A549 (cell line): ENCODE measurements at regions of chr21 and their contacts with region 1.

Region 1: DNA sequence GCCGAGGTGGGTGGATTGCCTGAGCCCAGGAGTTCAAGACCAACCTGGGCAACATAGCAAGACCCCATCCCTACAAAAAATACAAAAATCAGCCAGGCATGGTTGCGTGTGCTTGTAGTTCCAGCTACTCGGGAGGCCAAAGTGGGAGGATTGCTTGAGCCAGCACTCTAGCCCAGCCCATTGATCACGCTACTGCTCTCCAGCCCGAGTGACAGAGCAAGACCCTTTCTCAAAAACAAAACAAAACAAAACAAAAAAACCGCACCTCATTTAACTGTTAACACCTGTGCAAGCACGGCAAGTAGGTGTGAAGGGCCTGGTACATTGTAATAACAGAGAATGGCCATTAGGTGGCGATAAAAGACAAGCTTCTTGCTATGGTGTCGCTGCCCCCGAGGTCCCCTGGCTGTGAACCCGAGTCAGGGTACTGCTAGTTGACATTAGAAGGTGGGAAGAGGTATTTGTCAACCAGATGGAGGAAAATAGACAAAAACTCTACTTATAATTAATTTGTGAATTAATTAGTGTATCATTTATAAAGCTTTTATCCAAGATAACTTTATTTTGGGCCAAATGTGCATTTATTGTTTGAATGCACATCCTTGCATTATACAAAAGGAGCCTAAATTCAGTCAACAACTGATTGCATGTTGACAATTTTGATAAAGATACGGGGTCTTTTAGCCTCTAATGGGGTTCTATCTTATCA is 66.5 kb downstream of the SH3BGR start:
- DNase-seq: peak; percentile 65 to 69
- ATAC-seq: peak; percentile 77 to 92
- H3K4me3 ChIP-seq: no peak overlapping the region
- H3K27ac ChIP-seq: 0 out of 6 replicates have a peak overlapping the region, but pooled peaks of 1 of the 2 experiments have one; percentile 31
- H3K4me1 ChIP-seq: peaks cover 4% of the 10 kb centered on the region; the same call in 2 of the 3 replicates
- CTCF ChIP-seq: peak; percentile 76
- EP300 ChIP-seq: no peak
- POLR2A ChIP-seq: no peak
- RAD21 ChIP-seq: peak; percentile 89 to 92

Region 2: DNA sequence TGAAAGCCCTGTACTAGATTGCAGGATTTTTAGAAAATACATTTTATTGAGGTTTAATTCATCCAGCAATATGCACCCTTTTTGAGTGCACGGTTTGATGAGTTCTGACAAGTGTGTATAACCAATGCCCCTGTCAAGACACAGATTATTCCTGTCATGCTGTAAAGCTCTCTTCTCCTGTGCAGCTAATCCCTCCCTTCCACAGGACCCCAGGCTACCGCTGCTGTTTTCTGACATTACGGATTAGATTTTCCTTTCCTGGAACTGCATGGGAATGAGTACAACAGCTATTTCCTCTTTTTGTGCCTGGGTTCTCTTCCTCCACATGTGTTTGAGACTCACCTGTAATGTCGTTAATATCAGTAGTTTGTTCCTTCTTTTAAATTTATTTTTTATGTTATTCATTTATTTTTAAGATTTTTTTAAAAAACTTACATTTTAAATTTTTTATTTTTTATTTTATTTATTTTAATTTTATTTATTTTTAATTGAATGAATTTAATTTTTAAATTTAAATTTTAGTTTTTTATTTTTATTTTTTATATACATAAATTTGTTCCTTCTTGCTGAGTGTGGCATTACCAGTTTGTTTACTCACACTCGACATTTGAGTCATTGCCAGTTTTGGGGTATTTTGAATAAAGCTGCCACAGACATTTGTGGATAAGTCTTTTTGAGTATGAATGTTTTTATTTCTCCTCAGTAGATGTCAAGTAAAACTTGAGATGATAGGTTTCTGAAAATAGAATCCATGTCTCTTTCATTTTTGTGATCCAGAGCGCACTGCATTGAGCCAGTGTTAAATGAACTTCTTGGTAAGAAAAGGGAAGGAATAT is 15.5 kb after region 1 on chr21:
- CTCF ChIA-PET with region 1: interaction called, 20 read pairs
- POLR2A ChIA-PET with region 1: no interaction called
- DNase-seq: no peak
- ATAC-seq: no peak
- H3K4me3 ChIP-seq: no peak overlapping the region
- H3K27ac ChIP-seq: no peak overlapping the region
- H3K4me1 ChIP-seq: no peaks in the 10 kb centered on the region
- CTCF ChIP-seq: no peak
- EP300 ChIP-seq: no peak
- POLR2A ChIP-seq: no peak
- RAD21 ChIP-seq: no peak

Region 3: DNA sequence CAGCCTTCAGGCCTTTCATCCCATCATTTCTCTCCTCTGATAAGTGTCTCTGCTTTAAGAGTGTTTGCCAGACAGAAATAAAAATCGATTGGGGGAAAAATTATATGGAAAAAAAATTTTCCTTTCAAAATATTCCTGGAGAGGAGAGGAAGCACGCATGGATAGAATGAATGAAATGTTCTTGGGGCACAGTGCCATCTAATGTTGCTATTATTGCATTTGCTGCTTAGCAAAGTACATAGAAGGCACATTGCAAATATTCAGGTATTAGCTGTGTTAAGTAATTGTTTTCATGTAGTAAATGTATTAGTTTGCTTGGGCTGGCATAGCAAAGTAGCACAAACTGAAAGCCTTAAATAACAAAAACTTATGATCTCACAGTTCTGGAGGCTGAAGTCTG is 112.5 kb after region 1 on chr21:
- CTCF ChIA-PET with region 1: interaction called, 12 read pairs
- POLR2A ChIA-PET with region 1: no interaction called
- DNase-seq: peak in 1 of 2 experiments; percentile 26
- ATAC-seq: no peak
- H3K4me3 ChIP-seq: no peak overlapping the region
- H3K27ac ChIP-seq: peak overlapping the region; percentile 87 to 94
- H3K4me1 ChIP-seq: peaks cover 49% of the 10 kb centered on the region
- CTCF ChIP-seq: peak; percentile 38; the same call in 1 of the 3 replicates
- EP300 ChIP-seq: no peak
- POLR2A ChIP-seq: no peak
- RAD21 ChIP-seq: peak; percentile 31 to 50

Region 4: DNA sequence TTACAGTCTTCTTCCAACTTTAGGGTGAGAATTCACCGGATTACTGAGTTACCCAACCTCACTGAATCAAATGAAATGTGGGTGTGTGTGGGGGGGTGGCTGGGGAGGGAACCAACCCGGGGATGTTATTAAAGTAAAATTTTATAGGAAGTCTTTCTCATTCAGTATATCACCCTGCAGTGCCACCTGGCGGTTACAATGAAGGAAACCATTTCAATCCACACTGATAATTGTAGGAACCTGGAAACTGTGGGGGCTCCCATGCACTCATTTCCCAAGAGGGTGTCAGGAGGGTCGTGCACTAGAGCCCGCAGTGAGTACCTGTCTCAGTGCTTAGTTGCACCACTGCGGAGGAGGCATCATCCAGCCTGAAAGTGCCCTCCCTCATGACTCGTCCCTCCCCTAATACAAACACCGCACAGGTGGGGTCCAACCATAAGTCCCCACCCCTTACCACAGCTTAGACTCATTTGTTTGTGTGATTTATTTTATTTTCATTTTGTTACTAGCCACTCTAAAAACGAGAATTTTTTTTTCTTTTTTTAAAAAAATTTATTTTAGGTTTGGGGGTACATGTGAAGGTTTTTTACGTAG is 197.6 kb after region 1 on chr21:
- CTCF ChIA-PET with region 1: interaction called, 176 read pairs
- POLR2A ChIA-PET with region 1: no interaction called
- DNase-seq: peak; percentile 8 to 36
- ATAC-seq: peak; percentile 39 to 54; a peak in 2 of 6 replicates
- H3K4me3 ChIP-seq: no peak overlapping the region
- H3K27ac ChIP-seq: no peak overlapping the region
- H3K4me1 ChIP-seq: 0 out of 3 replicates have a peak, but pooled peaks cover 4% of the 10 kb centered on the region
- CTCF ChIP-seq: peak; percentile 58
- EP300 ChIP-seq: no peak
- POLR2A ChIP-seq: no peak
- RAD21 ChIP-seq: peak; percentile 66 to 78

Region 5: DNA sequence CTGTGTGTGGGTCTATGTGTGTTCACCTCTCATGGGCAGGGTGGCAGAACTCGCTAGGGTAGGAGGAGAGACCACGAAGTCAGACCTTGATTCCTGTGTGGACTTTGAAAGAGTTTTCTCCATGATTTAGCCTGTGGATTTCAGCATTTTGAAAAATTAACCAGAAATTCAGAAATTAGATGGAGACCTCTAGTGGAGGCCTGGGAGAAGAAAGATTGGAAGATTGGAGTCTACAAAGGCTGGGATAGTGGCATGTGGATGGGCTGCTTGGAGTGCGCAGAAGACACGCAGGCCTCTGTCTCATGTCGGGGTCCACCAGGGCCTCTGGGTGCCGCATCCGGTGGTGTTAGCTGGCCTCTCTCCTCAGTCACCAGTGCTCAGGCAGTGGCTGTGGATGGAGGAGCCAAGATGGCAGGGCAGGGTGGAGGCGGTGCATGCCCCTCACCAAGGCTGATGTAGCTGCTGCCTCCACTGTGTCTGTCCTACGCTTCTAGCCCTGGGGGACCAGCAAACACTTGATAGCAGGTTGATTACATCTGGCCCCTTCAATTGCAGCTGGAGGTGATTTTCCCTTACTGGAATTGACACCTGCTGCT is 207.9 kb after region 1 on chr21:
- CTCF ChIA-PET with region 1: interaction called, 12 read pairs
- POLR2A ChIA-PET with region 1: no interaction called
- DNase-seq: no peak
- ATAC-seq: no peak
- H3K4me3 ChIP-seq: no peak overlapping the region
- H3K27ac ChIP-seq: no peak overlapping the region
- H3K4me1 ChIP-seq: no peaks in the 10 kb centered on the region
- CTCF ChIP-seq: 0 out of 3 replicates have a peak, but pooled peaks have one; percentile 15
- EP300 ChIP-seq: no peak
- POLR2A ChIP-seq: no peak
- RAD21 ChIP-seq: no peak